Naive thymus-derived CD4-positive, alpha-beta T cell (primary cell): ENCODE measurements at regions of chr20 and their contacts with region 1.

Region 1: GRCh38 chr20:45934586-45935415 is at the start of gene PCIF1:
- DNase-seq: peak; percentile 98 to 99 (median 99)
- ATAC-seq: peak; percentile 87
- H3K4me3 ChIP-seq: peak within 1 kb of the TSS; percentile 96
- H3K4me3 Mint-ChIP-seq: peak within 1 kb of the TSS; percentile 85 to 99 (median 98)
- H3K27ac ChIP-seq: peak within 1 kb of the TSS; percentile 96
- H3K27ac Mint-ChIP-seq: peak within 1 kb of the TSS; percentile 95 to 99 (median 98)
- H3K4me1 ChIP-seq: peaks cover 10 to 21% of the 10 kb centered on the region in 2 donors
- H3K4me1 Mint-ChIP-seq: peaks cover 8 to 37% (median 33%) of the 10 kb centered on the region in 7 donors
- H3K27me3 ChIP-seq: no peaks in the 10 kb centered on the region
- H3K27me3 Mint-ChIP-seq: no peaks in the 10 kb centered on the region
- total RNA-seq, gene PCIF1: 42.3 to 79.6 (median 67.0) TPM

Region 2: GRCh38 chr20:44960103-44960852 is 974.5 kb before region 1 on chr20 and contains the start of gene TOMM34:
- CTCF ChIA-PET with region 1: no interaction called
- POLR2A ChIA-PET with region 1: no interaction called
- intact Hi-C with region 1: loop called in 1 of 2 experiments (anchors 2 kb)
- DNase-seq: peak; percentile 87 to 98 (median 91)
- ATAC-seq: peak; percentile 97
- H3K4me3 ChIP-seq: peak within 1 kb of the TSS; percentile 71
- H3K4me3 Mint-ChIP-seq: peak within 1 kb of the TSS; percentile 84 to 100 (median 96)
- H3K27ac ChIP-seq: peak within 1 kb of the TSS; percentile 75
- H3K27ac Mint-ChIP-seq: peak within 1 kb of the TSS; percentile 79 to 98 (median 93)
- H3K4me1 ChIP-seq: peaks cover 22 to 24% of the 10 kb centered on the region in 2 donors
- H3K4me1 Mint-ChIP-seq: peaks cover 26 to 71% (median 58%) of the 10 kb centered on the region in 7 donors
- H3K27me3 ChIP-seq: no peaks in the 10 kb centered on the region
- H3K27me3 Mint-ChIP-seq: no peaks in the 10 kb centered on the region
- total RNA-seq, gene TOMM34: 7.0 to 22.5 (median 8.6) TPM

Region 3: GRCh38 chr20:45592574-45593189 is 342.1 kb before region 1 on chr20:
- CTCF ChIA-PET with region 1: no interaction called
- POLR2A ChIA-PET with region 1: no interaction called
- intact Hi-C with region 1: no loop called
- DNase-seq: peak in 4 of 9 donors; percentile 1 to 20 (median 11)
- ATAC-seq: peak; percentile 65
- H3K4me3 ChIP-seq: no peak overlapping the region
- H3K4me3 Mint-ChIP-seq: no peak overlapping the region
- H3K27ac ChIP-seq: no peak overlapping the region
- H3K27ac Mint-ChIP-seq: no peak overlapping the region
- H3K4me1 ChIP-seq: no peaks in the 10 kb centered on the region
- H3K4me1 Mint-ChIP-seq: no peaks in the 10 kb centered on the region
- H3K27me3 ChIP-seq: peaks cover 0 to 2% of the 10 kb centered on the region in 2 donors
- H3K27me3 Mint-ChIP-seq: peaks cover 25 to 50% (median 41%) of the 10 kb centered on the region in 5 donors

Region 4: DNA sequence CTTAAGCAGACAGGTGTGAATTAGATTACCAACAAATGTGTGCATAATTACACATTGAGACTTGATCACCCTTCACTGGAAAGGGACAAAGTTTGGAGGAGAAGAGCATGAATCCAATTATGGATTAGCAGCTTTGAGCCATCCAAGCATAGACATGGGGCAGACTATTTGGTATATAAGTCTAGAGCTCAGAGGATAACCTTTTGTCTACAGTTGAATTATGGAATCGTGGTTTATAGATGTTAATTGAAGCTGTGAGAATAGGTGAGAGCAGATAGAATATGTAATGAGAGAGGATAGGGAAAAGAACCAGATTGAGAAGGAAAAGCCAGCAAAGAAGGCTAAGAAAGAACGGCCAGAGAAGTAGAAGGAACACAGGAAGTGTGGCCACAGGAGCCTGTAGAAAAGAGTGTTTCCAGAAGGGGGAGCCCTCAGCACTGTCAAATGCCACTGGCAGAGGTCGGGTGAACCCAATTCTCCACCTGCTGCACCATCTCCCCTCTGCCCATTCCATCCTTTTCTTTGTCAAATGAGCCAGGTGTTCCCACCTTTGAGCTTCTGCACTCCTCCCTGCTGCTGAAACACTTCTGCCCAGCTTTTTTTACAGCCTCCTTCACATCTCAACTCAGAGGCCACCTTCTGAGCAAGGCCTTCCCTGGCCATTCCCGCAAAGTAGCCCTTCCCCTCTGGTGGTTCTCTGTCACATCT is 135.7 kb before region 1 on chr20:
- CTCF ChIA-PET with region 1: no interaction called
- POLR2A ChIA-PET with region 1: interaction called, 3 read pairs
- intact Hi-C with region 1: loop called (anchors 1 to 10 kb)
- DNase-seq: peak; percentile 25 to 70 (median 58)
- ATAC-seq: peak; percentile 96
- H3K4me3 ChIP-seq: no peak overlapping the region
- H3K4me3 Mint-ChIP-seq: no peak overlapping the region
- H3K27ac ChIP-seq: peak overlapping the region; percentile 24
- H3K27ac Mint-ChIP-seq: peak overlapping the region in 8 of 9 donors; percentile 1 to 92 (median 52)
- H3K4me1 ChIP-seq: peaks cover 4 to 7% of the 10 kb centered on the region in 2 donors
- H3K4me1 Mint-ChIP-seq: peaks cover 9 to 21% (median 11%) of the 10 kb centered on the region in 7 donors
- H3K27me3 ChIP-seq: no peaks in the 10 kb centered on the region
- H3K27me3 Mint-ChIP-seq: no peaks in the 10 kb centered on the region

Region 5: DNA sequence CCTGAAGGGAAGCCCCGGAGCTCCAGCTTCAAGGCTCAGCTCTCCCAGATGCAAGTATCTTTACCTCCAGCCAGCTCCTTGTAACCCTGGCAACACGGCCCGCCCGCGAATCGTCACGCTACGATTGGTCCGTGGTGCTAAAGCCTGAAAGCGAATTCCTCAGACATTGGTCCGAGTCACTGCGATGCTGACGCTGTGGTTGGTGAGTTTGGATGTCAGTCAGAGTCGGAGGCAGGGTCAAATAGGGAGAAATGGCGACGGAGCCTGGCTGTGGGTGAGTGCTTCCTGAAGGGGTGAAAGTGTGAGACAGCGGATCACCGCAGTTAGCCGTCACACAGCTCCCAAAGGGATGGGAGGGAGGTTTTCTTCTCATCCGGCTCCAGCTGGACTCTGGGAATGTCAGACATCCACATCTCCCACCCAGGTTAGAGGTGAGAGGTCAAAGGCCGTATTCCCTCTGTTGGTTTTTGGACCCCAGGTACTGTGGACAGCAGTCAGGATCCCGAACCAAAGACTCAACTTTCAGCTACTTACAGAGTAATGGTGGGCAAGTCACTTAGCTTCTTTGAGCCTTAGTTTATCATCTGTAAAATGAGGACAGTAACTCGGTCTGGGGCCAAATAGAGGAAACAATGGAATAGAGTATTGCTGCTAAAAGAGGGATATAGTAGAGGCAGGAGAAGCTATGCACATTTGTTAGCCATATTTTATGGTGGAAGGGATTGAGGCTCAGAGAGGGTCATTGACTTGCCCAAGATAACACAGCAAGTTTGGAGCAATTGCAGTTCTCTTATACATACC is 53.6 kb before region 1 on chr20 and contains the start of gene ZSWIM1:
- CTCF ChIA-PET with region 1: interaction called, 4 read pairs
- POLR2A ChIA-PET with region 1: interaction called, 38 read pairs
- intact Hi-C with region 1: loop called (anchors 1 kb)
- DNase-seq: peak; percentile 88 to 99 (median 98)
- ATAC-seq: peak; percentile 99
- H3K4me3 ChIP-seq: peak within 1 kb of the TSS; percentile 75
- H3K4me3 Mint-ChIP-seq: peak within 1 kb of the TSS; percentile 83 to 95 (median 92)
- H3K27ac ChIP-seq: peak within 1 kb of the TSS; percentile 95
- H3K27ac Mint-ChIP-seq: peak within 1 kb of the TSS; percentile 91 to 95 (median 93)
- H3K4me1 ChIP-seq: peaks cover 9 to 18% of the 10 kb centered on the region in 2 donors
- H3K4me1 Mint-ChIP-seq: peaks cover 26 to 43% (median 38%) of the 10 kb centered on the region in 7 donors
- H3K27me3 ChIP-seq: no peaks in the 10 kb centered on the region
- H3K27me3 Mint-ChIP-seq: no peaks in the 10 kb centered on the region
- total RNA-seq, gene ZSWIM1: 8.2 to 16.0 (median 9.8) TPM

Region 6: DNA sequence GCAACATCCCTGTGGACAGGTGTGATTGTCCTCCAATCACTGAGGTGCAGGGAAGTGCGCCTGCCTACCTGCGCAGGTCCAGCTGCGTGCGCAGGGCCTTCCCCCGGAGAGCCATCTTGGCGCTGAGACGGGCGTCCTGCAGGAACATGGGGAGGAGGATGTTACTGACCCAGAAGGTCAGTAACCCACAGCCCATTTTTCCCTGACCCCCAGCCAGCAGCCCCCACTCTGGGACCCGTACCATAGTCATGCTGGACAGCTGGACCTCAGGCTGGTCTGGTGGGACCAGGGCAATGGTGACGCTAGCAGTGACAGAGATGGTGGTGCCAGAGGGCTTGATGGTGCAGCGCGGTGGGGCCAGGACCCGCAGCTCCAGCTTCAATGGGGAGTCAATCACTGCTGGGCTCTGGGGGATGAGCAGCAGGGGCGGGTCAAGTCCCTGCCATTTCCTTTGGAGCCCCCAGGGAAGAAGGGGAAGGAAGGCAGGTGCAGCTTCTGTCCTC is 32.6 kb before region 1 on chr20:
- CTCF ChIA-PET with region 1: no interaction called
- POLR2A ChIA-PET with region 1: no interaction called
- intact Hi-C with region 1: no loop called
- DNase-seq: no peak
- ATAC-seq: no peak
- H3K4me3 ChIP-seq: no peak overlapping the region
- H3K4me3 Mint-ChIP-seq: no peak overlapping the region
- H3K27ac ChIP-seq: no peak overlapping the region
- H3K27ac Mint-ChIP-seq: no peak overlapping the region
- H3K4me1 ChIP-seq: no peaks in the 10 kb centered on the region
- H3K4me1 Mint-ChIP-seq: no peaks in the 10 kb centered on the region
- H3K27me3 ChIP-seq: no peaks in the 10 kb centered on the region
- H3K27me3 Mint-ChIP-seq: no peaks in the 10 kb centered on the region

Region 7: DNA sequence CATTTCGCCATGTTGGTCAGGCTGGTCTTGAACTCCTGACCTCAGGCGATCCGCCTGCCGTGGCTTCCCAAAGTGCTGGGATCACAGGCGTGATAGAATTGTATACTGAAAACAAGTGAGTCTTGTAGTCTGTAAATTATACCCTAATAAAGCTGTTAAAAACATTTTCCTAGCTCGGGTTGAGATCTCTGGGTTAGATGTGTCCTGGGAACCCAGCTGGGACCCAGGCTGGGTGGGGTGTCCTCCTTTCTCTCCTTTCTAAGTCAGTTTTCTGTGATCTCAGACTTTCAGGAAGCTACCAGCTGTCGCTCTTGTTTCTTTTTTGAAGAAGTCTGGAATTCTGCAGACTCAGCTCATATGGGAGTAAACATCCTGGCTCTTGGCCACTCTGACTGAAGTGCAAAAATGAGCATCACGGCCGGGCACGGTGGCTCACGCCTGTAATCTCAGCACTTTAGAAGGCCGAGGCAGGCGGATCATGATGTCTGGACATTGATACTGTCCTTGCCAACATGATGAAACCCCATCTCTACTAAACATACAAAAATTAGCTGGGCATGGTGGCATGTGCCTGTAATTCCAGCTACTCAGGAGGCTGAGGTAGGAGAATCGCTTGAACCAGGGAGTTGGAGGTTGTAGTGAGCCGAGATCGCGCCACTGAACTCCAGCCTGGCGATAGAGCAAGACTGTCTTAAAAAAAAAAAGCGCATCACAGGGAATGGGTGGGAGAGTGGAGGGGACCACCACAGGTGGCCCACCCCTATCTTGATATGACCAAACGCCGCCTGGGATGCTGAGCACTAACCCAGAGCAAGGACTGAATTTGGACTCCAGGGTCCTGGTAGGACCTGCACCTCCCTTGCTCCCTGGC is 10.2 kb before region 1 on chr20:
- CTCF ChIA-PET with region 1: interaction called, 5 read pairs
- POLR2A ChIA-PET with region 1: interaction called, 25 read pairs
- intact Hi-C with region 1: no loop called
- DNase-seq: no peak
- ATAC-seq: no peak
- H3K4me3 ChIP-seq: no peak overlapping the region
- H3K4me3 Mint-ChIP-seq: no peak overlapping the region
- H3K27ac ChIP-seq: no peak overlapping the region
- H3K27ac Mint-ChIP-seq: peak overlapping the region in 3 of 9 donors; percentile 21 to 67 (median 26)
- H3K4me1 ChIP-seq: no peaks in the 10 kb centered on the region
- H3K4me1 Mint-ChIP-seq: peaks cover 0 to 14% (median 8%) of the 10 kb centered on the region in 7 donors
- H3K27me3 ChIP-seq: no peaks in the 10 kb centered on the region
- H3K27me3 Mint-ChIP-seq: peaks cover 0 to 20% (median 5%) of the 10 kb centered on the region in 5 donors

Region 8: DNA sequence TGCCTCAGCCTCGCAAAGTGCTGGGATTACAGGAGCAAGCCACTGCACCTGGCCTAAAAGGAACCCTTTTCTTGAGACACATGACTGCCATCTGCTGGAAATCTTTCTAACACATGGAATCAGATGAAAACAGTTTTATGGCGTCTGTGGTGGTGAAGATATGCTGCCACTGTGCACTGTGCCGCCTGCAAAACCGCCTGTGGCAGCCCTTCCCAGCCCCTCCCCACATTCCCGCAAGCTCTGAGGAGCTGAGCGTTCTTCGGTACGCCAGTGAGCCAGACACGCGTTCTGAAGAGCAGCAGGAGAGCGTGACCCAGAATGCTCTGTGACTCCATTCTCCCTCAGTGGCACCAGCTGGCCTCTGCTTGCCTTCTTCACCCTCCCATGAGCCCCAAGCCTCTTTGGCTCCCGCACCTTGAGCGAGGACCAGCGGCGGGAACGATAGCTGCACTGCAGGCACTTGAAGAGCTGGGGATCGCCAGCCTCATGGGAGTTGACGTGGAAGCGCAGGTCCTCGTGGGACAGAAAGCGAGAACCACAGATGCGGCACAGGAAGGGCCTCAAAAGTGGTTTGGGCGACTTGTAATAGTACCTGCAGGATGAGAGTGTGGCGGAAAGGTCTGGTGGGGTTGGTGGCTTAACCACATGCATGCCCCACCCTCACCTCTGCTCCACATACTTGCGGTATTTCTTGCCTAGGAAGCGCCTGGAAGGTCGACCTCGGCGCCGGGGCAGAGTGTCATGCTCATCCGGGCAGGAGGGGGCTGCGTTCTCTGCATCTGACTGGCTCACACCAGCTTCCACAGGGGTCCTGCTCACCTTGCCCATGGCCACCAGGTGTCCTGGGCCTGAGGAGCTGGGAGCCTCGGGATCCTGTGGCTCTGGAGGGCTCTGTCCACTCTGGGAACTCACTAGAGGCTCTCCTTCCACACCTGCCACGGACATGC is 28.5 kb after region 1 on chr20:
- CTCF ChIA-PET with region 1: interaction called, 54 read pairs
- POLR2A ChIA-PET with region 1: interaction called, 174 read pairs
- intact Hi-C with region 1: loop called in 1 of 2 experiments (anchors 2 kb)
- DNase-seq: peak in 5 of 9 donors; percentile 23 to 42 (median 31)
- ATAC-seq: peak; percentile 50
- H3K4me3 ChIP-seq: no peak overlapping the region
- H3K4me3 Mint-ChIP-seq: no peak overlapping the region
- H3K27ac ChIP-seq: no peak overlapping the region
- H3K27ac Mint-ChIP-seq: peak overlapping the region in 4 of 9 donors; percentile 20 to 76 (median 50)
- H3K4me1 ChIP-seq: no peaks in the 10 kb centered on the region
- H3K4me1 Mint-ChIP-seq: peaks cover 0 to 3% (median 0%) of the 10 kb centered on the region in 7 donors
- H3K27me3 ChIP-seq: no peaks in the 10 kb centered on the region
- H3K27me3 Mint-ChIP-seq: no peaks in the 10 kb centered on the region

Region 9: DNA sequence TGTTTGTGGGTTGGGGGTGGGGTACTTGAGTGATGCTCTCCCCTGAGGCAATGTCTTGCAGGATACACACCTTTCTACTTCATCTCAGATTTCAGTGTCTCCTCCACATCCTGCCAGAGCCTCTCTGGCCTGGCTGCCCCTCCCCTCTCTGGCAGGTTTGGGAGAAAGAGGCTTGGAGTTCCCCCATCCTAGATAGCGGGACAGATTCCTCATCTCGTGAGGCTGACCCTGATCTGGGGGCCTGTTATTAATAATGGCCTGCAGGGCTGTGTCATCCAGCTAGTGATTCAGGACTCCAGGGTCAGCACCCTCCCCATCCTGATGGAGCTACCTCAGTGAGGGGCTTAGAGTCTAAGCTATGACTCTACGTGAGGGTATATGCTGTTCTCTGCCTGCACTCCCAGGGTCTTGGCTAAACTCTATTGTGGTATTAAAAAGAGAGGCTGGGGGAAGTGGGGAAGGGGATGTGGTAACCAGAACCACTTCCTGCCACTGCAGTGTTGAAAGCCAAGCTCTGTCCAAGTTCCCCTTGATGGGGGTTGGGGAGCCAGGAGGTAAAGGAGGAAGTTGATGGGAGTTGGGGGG is 70.2 kb after region 1 on chr20:
- CTCF ChIA-PET with region 1: no interaction called
- POLR2A ChIA-PET with region 1: no interaction called
- intact Hi-C with region 1: no loop called
- DNase-seq: peak in 6 of 9 donors; percentile 42 to 73 (median 58)
- ATAC-seq: peak; percentile 71
- H3K4me3 ChIP-seq: peak overlapping the region; percentile 51
- H3K4me3 Mint-ChIP-seq: peak overlapping the region; percentile 68 to 85 (median 82)
- H3K27ac ChIP-seq: no peak overlapping the region
- H3K27ac Mint-ChIP-seq: peak overlapping the region; percentile 38 to 95 (median 71)
- H3K4me1 ChIP-seq: peaks cover 44 to 59% of the 10 kb centered on the region in 2 donors
- H3K4me1 Mint-ChIP-seq: peaks cover 57 to 91% (median 83%) of the 10 kb centered on the region in 7 donors
- H3K27me3 ChIP-seq: no peaks in the 10 kb centered on the region
- H3K27me3 Mint-ChIP-seq: peaks cover 12 to 30% (median 18%) of the 10 kb centered on the region in 5 donors

Region 10: GRCh38 chr20:46089417-46090388 is 154.9 kb after region 1 on chr20 and contains the start of gene NCOA5:
- CTCF ChIA-PET with region 1: no interaction called
- POLR2A ChIA-PET with region 1: interaction called, 9 read pairs
- intact Hi-C with region 1: loop called (anchors 1 kb)
- DNase-seq: peak; percentile 90 to 95 (median 94)
- ATAC-seq: peak; percentile 98
- H3K4me3 ChIP-seq: peak within 1 kb of the TSS; percentile 73
- H3K4me3 Mint-ChIP-seq: peak within 1 kb of the TSS; percentile 86 to 95 (median 90)
- H3K27ac ChIP-seq: peak within 1 kb of the TSS; percentile 89
- H3K27ac Mint-ChIP-seq: peak within 1 kb of the TSS; percentile 86 to 95 (median 90)
- H3K4me1 ChIP-seq: peaks cover 24 to 36% of the 10 kb centered on the region in 2 donors
- H3K4me1 Mint-ChIP-seq: peaks cover 29 to 53% (median 51%) of the 10 kb centered on the region in 7 donors
- H3K27me3 ChIP-seq: no peaks in the 10 kb centered on the region
- H3K27me3 Mint-ChIP-seq: no peaks in the 10 kb centered on the region
- total RNA-seq, gene NCOA5: 15.7 to 43.8 (median 39.4) TPM